IMR-90 (cell line): ENCODE measurements at regions of chr18 and their contacts with region 1.

Region 1: GRCh38 chr18:22983175-22983574 is 50.0 kb downstream of the RBBP8 start:
- DNase-seq: peak; percentile 64
- ATAC-seq: peak; percentile 59
- H3K4me3 ChIP-seq: no peak overlapping the region
- H3K27ac ChIP-seq: no peak overlapping the region
- H3K4me1 ChIP-seq: peaks cover under 1% of the 10 kb centered on the region; the same call in 1 of the 2 replicates
- H3K27me3 ChIP-seq: no peaks in the 10 kb centered on the region
- CTCF ChIP-seq: peak; percentile 66
- POLR2A ChIP-seq: no peak
- RAD21 ChIP-seq: peak; percentile 67

Region 2: GRCh38 chr18:21914739-21915319 is 1068.3 kb before region 1 on chr18:
- CTCF ChIA-PET with region 1: no interaction called
- POLR2A ChIA-PET with region 1: no interaction called
- dilution Hi-C with region 1: no loop called
- in situ Hi-C with region 1: loop called (anchors 25 kb)
- intact Hi-C with region 1: loop called (anchors 10 kb)
- DNase-seq: peak; percentile 62
- ATAC-seq: peak; percentile 92
- H3K4me3 ChIP-seq: no peak overlapping the region
- H3K27ac ChIP-seq: no peak overlapping the region
- H3K4me1 ChIP-seq: no peaks in the 10 kb centered on the region
- H3K27me3 ChIP-seq: peaks cover 16% of the 10 kb centered on the region
- CTCF ChIP-seq: peak; percentile 86
- POLR2A ChIP-seq: no peak
- RAD21 ChIP-seq: peak; percentile 85

Region 3: GRCh38 chr18:22800551-22800951 is 182.6 kb before region 1 on chr18:
- CTCF ChIA-PET with region 1: interaction called, 7 read pairs
- POLR2A ChIA-PET with region 1: interaction called, 3 read pairs
- dilution Hi-C with region 1: no loop called
- in situ Hi-C with region 1: no loop called
- intact Hi-C with region 1: loop called (anchors 1 kb)
- DNase-seq: peak; percentile 28
- ATAC-seq: no peak
- H3K4me3 ChIP-seq: no peak overlapping the region
- H3K27ac ChIP-seq: no peak overlapping the region
- H3K4me1 ChIP-seq: 0 out of 2 replicates have a peak, but pooled peaks cover 2% of the 10 kb centered on the region
- H3K27me3 ChIP-seq: no peaks in the 10 kb centered on the region
- CTCF ChIP-seq: no peak
- POLR2A ChIP-seq: no peak
- RAD21 ChIP-seq: no peak

Region 4: GRCh38 chr18:22813648-22814328 is 169.4 kb before region 1 on chr18:
- CTCF ChIA-PET with region 1: interaction called, 13 read pairs
- POLR2A ChIA-PET with region 1: no interaction called
- dilution Hi-C with region 1: no loop called
- in situ Hi-C with region 1: loop called (anchors 5 kb)
- intact Hi-C with region 1: loop called (anchors 1 kb)
- DNase-seq: peak; percentile 65
- ATAC-seq: peak; percentile 86
- H3K4me3 ChIP-seq: no peak overlapping the region
- H3K27ac ChIP-seq: no peak overlapping the region
- H3K4me1 ChIP-seq: no peaks in the 10 kb centered on the region
- H3K27me3 ChIP-seq: no peaks in the 10 kb centered on the region
- CTCF ChIP-seq: peak; percentile 85
- POLR2A ChIP-seq: peak; percentile 52; the same call in 1 of the 2 replicates
- RAD21 ChIP-seq: peak; percentile 96

Region 5: DNA sequence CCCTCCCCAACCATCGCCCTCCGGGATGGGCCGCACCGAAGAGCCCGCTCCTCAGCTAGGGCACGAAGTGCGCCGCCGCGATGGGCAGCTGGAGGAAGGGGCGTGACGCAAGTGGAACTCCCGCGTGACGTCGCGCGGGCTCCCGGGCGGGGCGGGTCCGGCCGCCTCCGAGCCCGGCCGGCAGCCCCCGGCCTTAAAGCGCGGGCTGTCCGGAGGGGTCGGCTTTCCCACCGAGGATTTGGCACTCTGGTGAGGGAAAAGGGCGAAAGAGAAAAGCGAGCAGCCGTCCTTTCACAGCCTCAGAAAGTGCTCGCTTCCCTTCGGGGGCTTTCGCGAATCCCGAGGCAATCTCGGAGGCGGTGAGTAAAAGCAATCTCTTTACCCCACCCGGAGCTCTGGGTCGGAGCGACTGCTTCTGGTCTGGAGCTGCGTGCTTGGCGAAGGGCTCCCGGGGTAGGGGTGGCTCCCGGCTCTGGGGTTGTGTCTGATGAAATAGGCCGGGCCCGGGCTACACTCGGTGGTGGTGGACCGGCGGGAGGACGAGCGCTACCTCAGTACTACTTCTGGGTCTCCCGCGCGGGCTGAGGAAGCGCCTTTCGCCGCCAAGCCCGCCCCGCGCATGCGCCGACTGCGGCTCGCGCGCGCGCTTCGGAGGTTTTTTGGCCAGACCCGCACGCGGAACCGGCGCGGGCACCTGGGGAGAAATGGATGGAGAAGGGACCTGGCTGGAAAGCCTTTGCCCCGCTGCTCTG is 49.8 kb before region 1 on chr18 and contains the start of gene RBBP8:
- CTCF ChIA-PET with region 1: interaction called, 7 read pairs
- POLR2A ChIA-PET with region 1: no interaction called
- dilution Hi-C with region 1: no loop called
- in situ Hi-C with region 1: loop called (anchors 5 kb)
- intact Hi-C with region 1: loop called (anchors 2 kb)
- DNase-seq: peak; percentile 75
- ATAC-seq: peak; percentile 96
- H3K4me3 ChIP-seq: peak within 1 kb of the TSS; percentile 86
- H3K27ac ChIP-seq: peak within 1 kb of the TSS; percentile 84
- H3K4me1 ChIP-seq: no peaks in the 10 kb centered on the region
- H3K27me3 ChIP-seq: no peaks in the 10 kb centered on the region
- CTCF ChIP-seq: no peak
- POLR2A ChIP-seq: peak; percentile 84
- RAD21 ChIP-seq: no peak
- total RNA-seq, gene RBBP8: 21.1 and 25.3 TPM in 2 replicates

Region 6: GRCh38 chr18:23422672-23423418 is 439.7 kb after region 1 on chr18:
- CTCF ChIA-PET with region 1: no interaction called
- POLR2A ChIA-PET with region 1: no interaction called
- dilution Hi-C with region 1: no loop called
- in situ Hi-C with region 1: no loop called
- intact Hi-C with region 1: no loop called
- DNase-seq: peak; percentile 16
- ATAC-seq: no peak; the same call in 1 of the 2 replicates
- H3K4me3 ChIP-seq: no peak overlapping the region
- H3K27ac ChIP-seq: no peak overlapping the region
- H3K4me1 ChIP-seq: peaks cover 7% of the 10 kb centered on the region
- H3K27me3 ChIP-seq: no peaks in the 10 kb centered on the region
- CTCF ChIP-seq: no peak
- POLR2A ChIP-seq: no peak
- RAD21 ChIP-seq: no peak